Dorsolateral prefrontal cortex (tissue), 120 donors: ENCODE measurements at regions of chr3 and their contacts with region 1.

Region 1: GRCh38 chr3:32667122-32667521 is 17.9 kb upstream of the CNOT10 start:
- DNase-seq: no peak
- H3K4me3 ChIP-seq: no peak overlapping the region
- H3K27ac ChIP-seq: no peak overlapping the region
- H3K27me3 ChIP-seq: peaks cover 0 to 6% (median 0%) of the 10 kb centered on the region in 45 donors
- CTCF ChIP-seq: no peak

Region 2: GRCh38 chr3:32097768-32098167 is 569.4 kb before region 1 on chr3:
- intact Hi-C with region 1: no loop called
- DNase-seq: no peak
- H3K4me3 ChIP-seq: no peak overlapping the region
- H3K27ac ChIP-seq: no peak overlapping the region
- H3K27me3 ChIP-seq: peaks cover 0 to 6% (median 0%) of the 10 kb centered on the region in 45 donors
- CTCF ChIP-seq: no peak

Region 3: DNA sequence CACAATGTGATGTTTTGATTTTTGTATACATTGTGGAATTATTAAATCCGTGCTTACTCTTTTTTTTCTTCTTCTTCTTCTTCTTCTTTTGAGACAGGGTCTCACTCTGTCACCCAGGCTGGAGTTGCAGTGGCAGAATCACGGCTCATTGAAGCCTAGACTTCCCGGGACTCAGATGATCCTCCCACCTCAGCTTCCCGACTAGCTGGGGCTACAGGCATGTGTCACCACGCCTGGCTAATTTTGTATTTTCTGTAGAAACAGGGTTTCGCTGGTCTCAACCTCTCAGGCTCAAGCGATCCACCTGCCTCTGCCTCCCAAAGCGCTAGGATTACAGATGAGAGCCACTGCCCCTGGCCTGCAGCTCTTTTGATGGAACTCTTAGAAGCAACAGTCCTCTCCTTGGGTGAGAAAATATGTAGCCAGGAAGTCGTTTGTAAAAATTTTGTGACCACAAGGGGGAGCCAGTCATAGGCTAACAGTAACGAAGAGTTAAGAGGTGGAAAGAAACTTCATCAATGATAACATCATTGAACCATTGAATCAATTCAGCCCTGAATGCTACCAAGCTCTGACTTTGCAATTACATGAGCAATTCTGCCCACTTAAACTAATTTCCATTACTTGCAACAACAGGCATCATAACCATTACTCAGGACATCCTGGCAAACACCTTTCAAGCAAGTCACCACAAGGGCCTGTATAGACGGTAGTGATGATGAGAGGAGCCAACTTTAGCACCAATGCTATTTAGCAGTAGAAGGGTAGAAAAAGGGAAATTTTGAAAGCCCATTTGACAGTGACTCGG is 292.1 kb before region 1 on chr3:
- intact Hi-C with region 1: loop called in 1 of 2 experiments (anchors 10 kb)
- DNase-seq: peak in 3 of 10 donors; percentile 28 to 67 (median 44)
- H3K4me3 ChIP-seq: no peak overlapping the region
- H3K27ac ChIP-seq: no peak overlapping the region
- H3K27me3 ChIP-seq: peaks cover 0 to 4% (median 0%) of the 10 kb centered on the region in 45 donors
- CTCF ChIP-seq: peak; percentile 56 to 81 (median 70)

Region 4: GRCh38 chr3:32510075-32510724 is 156.9 kb before region 1 on chr3:
- intact Hi-C with region 1: loop called (anchors 1 to 5 kb)
- DNase-seq: peak in 9 of 10 donors; percentile 34 to 83 (median 63)
- H3K4me3 ChIP-seq: no peak overlapping the region
- H3K27ac ChIP-seq: no peak overlapping the region
- H3K27me3 ChIP-seq: no peaks in the 10 kb centered on the region
- CTCF ChIP-seq: peak; percentile 46 to 92 (median 78)

Region 5: GRCh38 chr3:33250712-33251111 is 583.6 kb after region 1 on chr3:
- intact Hi-C with region 1: no loop called
- DNase-seq: no peak
- H3K4me3 ChIP-seq: no peak overlapping the region
- H3K27ac ChIP-seq: no peak overlapping the region
- H3K27me3 ChIP-seq: no peaks in the 10 kb centered on the region
- CTCF ChIP-seq: no peak